BJ (cell line): ENCODE measurements at regions of chr12 and their contacts with region 1.

Region 1: GRCh38 chr12:40032433-40033241 is 73.2 kb downstream of the SLC2A13 start:
- DNase-seq: no peak
- H3K4me3 ChIP-seq: no peak overlapping the region
- H3K27me3 ChIP-seq: no peaks in the 10 kb centered on the region
- CTCF ChIP-seq: no peak

Region 2: GRCh38 chr12:39984670-39985069 is 48.0 kb before region 1 on chr12:
- CTCF ChIA-PET with region 1: no interaction called
- POLR2A ChIA-PET with region 1: no interaction called
- DNase-seq: no peak
- H3K4me3 ChIP-seq: no peak overlapping the region
- H3K27me3 ChIP-seq: no peaks in the 10 kb centered on the region
- CTCF ChIP-seq: no peak

Region 3: DNA sequence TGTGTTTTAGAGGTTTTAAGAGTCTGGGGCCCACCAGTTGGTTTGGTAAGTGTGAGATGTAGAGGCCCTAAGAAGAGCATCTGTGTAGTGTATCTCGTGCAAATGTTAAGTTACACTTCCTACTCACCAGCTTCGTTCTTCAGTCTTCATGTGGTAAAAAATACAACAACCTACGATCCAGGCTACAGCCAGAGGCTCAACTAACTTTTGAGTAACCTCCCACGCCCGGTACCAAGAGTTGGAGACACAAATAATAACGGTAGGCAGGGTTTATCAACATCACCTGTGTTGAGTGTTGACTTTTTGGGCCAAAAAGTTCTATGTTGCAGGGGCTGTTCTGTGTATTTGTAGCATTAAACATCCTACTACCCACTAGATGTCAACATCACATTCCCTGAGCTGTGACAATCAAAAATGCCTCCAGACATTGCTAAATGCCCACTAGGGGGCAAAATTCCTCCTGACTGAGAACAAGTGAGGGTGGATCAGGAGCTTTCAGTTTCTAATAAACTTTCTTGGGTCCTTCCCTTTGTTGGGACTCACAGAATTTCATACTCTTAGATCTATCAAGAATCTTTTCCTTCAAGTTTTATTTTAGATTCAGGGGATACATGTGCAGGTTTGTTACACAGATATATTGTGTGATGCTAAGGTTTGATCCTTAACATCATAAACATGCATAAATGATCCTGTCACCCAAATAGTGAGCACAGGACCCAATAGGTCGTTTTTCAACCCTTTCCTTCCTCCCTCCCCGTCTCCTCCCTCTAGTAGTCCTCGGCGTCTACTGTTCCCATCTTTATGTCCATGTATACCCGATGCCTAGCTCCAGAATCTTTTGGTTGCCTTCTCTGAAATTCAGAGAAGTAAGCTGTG is 21.5 kb before region 1 on chr12:
- CTCF ChIA-PET with region 1: interaction called, 13 read pairs
- POLR2A ChIA-PET with region 1: no interaction called
- DNase-seq: no peak
- H3K4me3 ChIP-seq: no peak overlapping the region
- H3K27me3 ChIP-seq: no peaks in the 10 kb centered on the region
- CTCF ChIP-seq: peak; percentile 82

Region 4: DNA sequence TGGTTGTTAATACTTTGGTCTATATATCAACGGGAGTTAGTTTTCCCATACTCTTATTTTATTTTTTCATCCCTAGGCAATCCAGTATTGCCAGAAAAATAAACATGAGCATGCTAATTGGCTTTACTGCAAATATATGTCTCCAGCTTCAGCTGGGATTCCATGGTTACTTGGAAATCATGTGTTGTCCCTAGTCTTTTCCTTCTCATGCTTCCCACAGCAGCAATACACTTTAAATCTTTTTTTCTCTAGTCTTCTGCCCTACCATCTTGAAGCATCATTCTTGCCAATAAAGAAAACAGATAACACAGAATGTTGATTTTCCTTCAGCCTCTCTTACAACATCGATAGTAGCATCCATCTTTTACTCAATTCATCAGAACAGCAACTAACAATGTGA is 13.0 kb after region 1 on chr12:
- CTCF ChIA-PET with region 1: no interaction called
- POLR2A ChIA-PET with region 1: no interaction called
- DNase-seq: no peak
- H3K4me3 ChIP-seq: no peak overlapping the region
- H3K27me3 ChIP-seq: no peaks in the 10 kb centered on the region
- CTCF ChIP-seq: no peak